ENCODE measurements at regions of chr16 and their contacts with region 1.

Region 1: DNA sequence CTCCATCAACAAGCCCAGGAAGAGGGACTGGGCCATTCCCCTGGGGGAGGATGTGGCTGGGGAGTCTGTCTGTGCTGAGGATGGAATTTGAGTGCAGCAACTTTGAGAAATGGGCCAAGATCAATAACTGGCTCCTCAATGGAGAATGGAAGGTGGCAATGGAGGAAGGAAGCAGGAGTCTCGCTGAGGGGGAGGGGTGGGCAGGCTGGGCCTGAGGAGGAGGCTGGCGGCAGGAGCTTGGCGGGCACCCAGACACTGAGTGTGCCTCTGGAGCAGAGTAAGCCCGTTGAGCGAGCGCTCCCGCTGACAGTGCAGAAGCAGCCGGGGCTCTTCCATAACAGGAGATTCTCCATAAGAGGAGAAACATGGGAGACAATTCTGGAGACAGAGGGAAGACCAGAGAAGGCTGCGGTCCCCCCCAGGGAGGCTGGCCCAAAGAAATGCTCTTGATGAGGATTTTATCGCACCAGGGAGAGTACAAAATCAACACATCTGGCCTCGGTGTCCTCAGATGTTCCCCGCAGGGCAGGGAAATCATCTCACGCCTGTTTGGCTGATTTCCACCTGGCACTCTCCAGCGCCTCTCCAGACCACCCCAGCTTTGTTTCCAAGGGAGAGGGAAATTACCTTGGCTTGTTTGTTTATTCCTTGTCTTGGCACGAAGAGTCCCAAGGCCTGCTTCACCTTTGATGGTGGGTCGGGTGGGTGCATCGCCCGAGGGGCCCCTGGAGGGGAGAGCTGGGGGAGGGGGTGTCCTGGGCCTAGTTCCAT is 2.8 kb upstream of the MMP15 start:
- DNase-seq: peak; percentile 59
- H3K27ac ChIP-seq: peak overlapping the region; percentile 79
- CTCF ChIP-seq: no peak

Region 2: DNA sequence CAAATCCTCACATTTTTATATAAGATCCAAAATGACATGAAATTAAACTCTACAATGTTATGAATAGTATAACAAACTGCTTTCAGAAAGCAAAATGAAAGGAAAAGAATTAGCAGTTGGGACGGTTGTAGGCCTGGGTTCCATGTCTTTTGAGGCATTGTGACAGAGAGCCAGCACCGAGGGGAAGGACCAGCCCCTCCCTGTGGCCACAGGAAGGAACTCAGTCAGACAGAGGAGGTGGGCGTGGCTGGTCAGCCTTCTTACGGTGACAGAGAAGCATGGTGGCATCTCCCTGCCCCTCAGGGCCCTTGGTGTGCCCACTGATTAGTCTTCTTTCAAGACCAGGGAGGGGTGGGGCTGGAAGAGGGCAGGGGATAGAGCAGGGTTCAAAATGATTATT is 28.0 kb before region 1 on chr16:
- CTCF ChIA-PET with region 1: no interaction called
- POLR2A ChIA-PET with region 1: no interaction called
- DNase-seq: no peak
- H3K27ac ChIP-seq: peak overlapping the region; percentile 61
- CTCF ChIP-seq: no peak; the same call in 1 of the 2 replicates

Region 3: DNA sequence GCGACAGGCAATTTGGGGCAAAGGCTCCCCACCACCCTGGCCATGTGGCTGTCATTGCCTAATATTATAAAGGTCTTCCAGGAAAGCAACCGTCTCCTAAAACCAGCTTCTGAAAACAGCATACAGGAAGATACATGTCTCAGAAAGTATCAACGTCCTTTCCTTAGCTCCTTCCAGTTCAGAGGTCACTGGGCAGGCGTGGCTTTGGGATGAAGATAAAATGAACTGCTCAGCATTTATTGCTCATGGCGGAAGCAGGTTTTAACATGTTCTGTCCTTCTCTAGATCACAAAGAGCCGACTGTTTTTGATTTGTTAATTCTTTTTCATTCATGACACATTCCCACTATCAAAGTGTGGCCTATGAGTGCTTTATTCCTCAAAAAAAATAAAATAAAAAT is 98.3 kb after region 1 on chr16:
- CTCF ChIA-PET with region 1: interaction called, 11 read pairs
- POLR2A ChIA-PET with region 1: no interaction called
- DNase-seq: peak; percentile 72
- H3K27ac ChIP-seq: no peak overlapping the region
- CTCF ChIP-seq: no peak

Measured in RWPE1 (cell line).